ENCODE measurements at regions of chr7 and their contacts with region 1.

Region 1: DNA sequence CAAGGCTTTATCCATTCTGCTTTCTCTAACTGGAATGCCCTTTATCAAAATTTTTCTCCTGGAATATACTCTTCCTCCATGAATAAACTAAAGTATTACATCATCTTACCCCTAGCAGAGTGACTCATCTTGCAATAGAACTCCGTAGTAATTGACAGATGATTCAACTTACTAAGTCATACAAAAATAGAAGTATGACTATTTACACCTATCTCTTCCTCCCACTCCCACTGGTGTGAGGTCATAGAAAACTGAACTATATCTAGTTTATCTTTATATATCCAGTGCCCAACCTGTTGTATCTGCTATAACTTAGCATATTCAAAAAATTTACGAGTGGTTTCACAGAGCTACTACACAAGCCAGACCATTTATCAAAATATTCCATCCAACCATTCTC is 26.1 kb downstream of the ABCB1 start:
- DNase-seq: no peak
- H3K4me3 Mint-ChIP-seq: no peak overlapping the region
- H3K27ac Mint-ChIP-seq: no peak overlapping the region
- H3K4me1 Mint-ChIP-seq: peaks cover 12% of the 10 kb centered on the region
- H3K27me3 Mint-ChIP-seq: no peaks in the 10 kb centered on the region

Region 2: DNA sequence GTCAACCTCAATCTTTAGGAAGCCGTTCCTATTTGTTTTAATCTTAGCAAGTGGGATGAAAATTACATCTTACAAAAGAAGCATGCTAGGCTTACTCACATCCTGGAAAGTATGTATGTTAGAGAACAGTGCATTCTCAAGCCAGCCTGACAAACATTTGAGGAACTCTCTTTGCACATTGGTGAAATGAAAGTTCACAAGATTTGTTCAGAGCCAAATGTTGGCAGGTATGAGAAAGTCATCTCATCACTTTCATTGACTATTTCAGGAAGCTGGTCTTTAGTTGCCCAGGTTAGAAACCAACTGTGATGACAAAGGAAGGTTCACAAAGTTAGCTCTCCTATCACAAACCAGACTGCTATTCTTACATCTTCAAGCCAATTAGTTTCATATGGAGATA is 31.0 kb before region 1 on chr7:
- CTCF ChIA-PET with region 1: no interaction called
- POLR2A ChIA-PET with region 1: no interaction called
- intact Hi-C with region 1: no loop called
- DNase-seq: no peak
- H3K4me3 Mint-ChIP-seq: no peak overlapping the region
- H3K27ac Mint-ChIP-seq: no peak overlapping the region
- H3K4me1 Mint-ChIP-seq: no peaks in the 10 kb centered on the region
- H3K27me3 Mint-ChIP-seq: peaks cover 2% of the 10 kb centered on the region

Region 3: GRCh38 chr7:87600130-87601124 is 25.8 kb after region 1 on chr7 and contains the start of gene ABCB1:
- CTCF ChIA-PET with region 1: interaction called, 3 read pairs
- POLR2A ChIA-PET with region 1: no interaction called
- intact Hi-C with region 1: loop called (anchors 1 kb)
- DNase-seq: peak; percentile 61
- H3K4me3 Mint-ChIP-seq: peak within 1 kb of the TSS; percentile 79
- H3K27ac Mint-ChIP-seq: peak within 1 kb of the TSS; percentile 19
- H3K4me1 Mint-ChIP-seq: peaks cover 22% of the 10 kb centered on the region
- H3K27me3 Mint-ChIP-seq: peaks cover 38% of the 10 kb centered on the region
- total RNA-seq, gene ABCB1: 4.7 to 5.4 TPM

Region 4: GRCh38 chr7:87628780-87629569 is 54.3 kb after region 1 on chr7:
- CTCF ChIA-PET with region 1: no interaction called
- POLR2A ChIA-PET with region 1: no interaction called
- intact Hi-C with region 1: loop called (anchors 1 kb)
- DNase-seq: peak; percentile 35
- H3K4me3 Mint-ChIP-seq: peak overlapping the region; percentile 74
- H3K27ac Mint-ChIP-seq: no peak overlapping the region
- H3K4me1 Mint-ChIP-seq: peaks cover 9% of the 10 kb centered on the region
- H3K27me3 Mint-ChIP-seq: peaks cover 14% of the 10 kb centered on the region

Measured in activated CD4-positive, alpha-beta memory T cell treated with anti-CD3 and anti-CD28 coated beads for 36 hours (primary cell).